ENCODE measurements at regions of chr16 and their contacts with region 1.

Region 1: DNA sequence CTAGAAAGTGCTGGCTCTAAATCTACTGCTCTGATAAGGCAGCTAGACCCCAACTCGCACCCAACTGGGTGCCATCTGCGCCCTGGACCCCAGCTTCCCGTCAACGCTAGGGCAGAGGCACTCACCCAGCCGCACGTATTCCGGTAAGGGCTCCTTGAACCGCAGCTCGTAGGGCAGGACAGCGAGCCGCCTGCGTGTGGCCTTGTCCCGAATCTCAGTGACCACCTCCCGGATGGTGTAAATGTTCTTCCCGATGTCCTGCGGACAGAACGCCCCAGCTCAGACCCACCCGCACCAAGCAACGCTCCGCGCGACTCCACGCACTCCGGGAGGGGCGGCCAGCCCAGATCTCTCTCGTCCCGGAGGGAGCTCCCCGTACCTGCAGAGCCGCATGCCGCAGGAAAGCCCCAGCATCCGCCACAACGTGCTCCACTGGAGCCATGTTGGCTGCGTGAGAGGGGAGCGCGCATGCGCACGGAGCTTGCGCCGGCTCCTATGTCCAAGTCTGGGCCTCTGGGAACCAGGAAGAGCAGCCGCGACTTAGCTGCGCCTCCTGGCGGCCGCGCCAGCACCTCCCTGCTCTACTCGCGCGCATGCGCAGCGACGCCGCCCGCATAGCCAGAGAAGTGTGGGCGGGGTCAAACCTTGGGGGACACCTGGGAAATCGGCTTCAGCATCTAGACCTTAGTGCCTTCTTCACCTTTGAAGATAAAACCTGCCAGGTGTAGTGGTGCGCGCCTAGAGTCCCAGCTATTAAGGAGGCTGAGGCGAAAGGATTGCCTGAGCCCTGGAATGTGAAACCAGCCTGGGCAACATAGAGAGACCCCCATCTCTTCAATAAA is at the start of gene NOB1:
- DNase-seq: peak; percentile 97
- ATAC-seq: peak; percentile 99
- H3K4me3 Mint-ChIP-seq: peak within 1 kb of the TSS; percentile 100
- H3K27ac Mint-ChIP-seq: peak within 1 kb of the TSS; percentile 100
- H3K4me1 Mint-ChIP-seq: peaks cover 22% of the 10 kb centered on the region
- H3K27me3 Mint-ChIP-seq: no peaks in the 10 kb centered on the region
- CTCF ChIP-seq: peak; percentile 90
- total RNA-seq, gene NOB1: 139 to 146 TPM

Region 2: GRCh38 chr16:69381231-69381630 is 373.5 kb before region 1 on chr16:
- CTCF ChIA-PET with region 1: interaction called, 10 read pairs
- POLR2A ChIA-PET with region 1: interaction called, 6 read pairs
- intact Hi-C with region 1: no loop called
- DNase-seq: no peak
- ATAC-seq: no peak
- H3K4me3 Mint-ChIP-seq: no peak overlapping the region
- H3K27ac Mint-ChIP-seq: peak overlapping the region; percentile 55
- H3K4me1 Mint-ChIP-seq: peaks cover 45% of the 10 kb centered on the region
- H3K27me3 Mint-ChIP-seq: no peaks in the 10 kb centered on the region
- CTCF ChIP-seq: no peak

Region 3: GRCh38 chr16:69709456-69710084 is 45.1 kb before region 1 on chr16:
- CTCF ChIA-PET with region 1: interaction called, 47 read pairs
- POLR2A ChIA-PET with region 1: interaction called, 21 read pairs
- intact Hi-C with region 1: no loop called
- DNase-seq: no peak
- ATAC-seq: peak; percentile 53
- H3K4me3 Mint-ChIP-seq: no peak overlapping the region
- H3K27ac Mint-ChIP-seq: peak overlapping the region; percentile 67
- H3K4me1 Mint-ChIP-seq: peaks cover 5% of the 10 kb centered on the region
- H3K27me3 Mint-ChIP-seq: no peaks in the 10 kb centered on the region
- CTCF ChIP-seq: peak; percentile 86

Region 4: DNA sequence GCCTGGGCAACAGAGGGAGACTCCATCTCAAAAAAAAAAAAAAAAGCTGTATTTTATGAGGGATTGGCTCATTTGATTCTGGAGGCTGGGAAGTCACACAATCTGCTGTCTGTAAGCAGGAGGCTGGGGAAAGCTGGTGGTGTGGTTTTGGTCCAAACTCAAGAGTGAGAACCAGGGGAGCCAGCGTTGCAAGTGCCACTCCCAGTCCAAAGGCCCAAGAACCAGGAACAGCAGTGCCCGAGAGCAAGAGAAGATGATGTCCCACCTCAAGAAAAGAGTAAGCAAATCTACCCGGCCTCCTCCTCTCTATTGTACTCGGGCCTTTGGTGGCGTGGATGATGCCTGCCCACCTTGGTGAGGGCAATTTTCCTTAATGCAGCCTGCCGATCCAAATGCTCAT is 22.6 kb before region 1 on chr16:
- CTCF ChIA-PET with region 1: interaction called, 31 read pairs
- POLR2A ChIA-PET with region 1: interaction called, 13 read pairs
- intact Hi-C with region 1: no loop called
- DNase-seq: no peak
- ATAC-seq: no peak
- H3K4me3 Mint-ChIP-seq: no peak overlapping the region
- H3K27ac Mint-ChIP-seq: no peak overlapping the region
- H3K4me1 Mint-ChIP-seq: peaks cover 9% of the 10 kb centered on the region
- H3K27me3 Mint-ChIP-seq: no peaks in the 10 kb centered on the region
- CTCF ChIP-seq: no peak

Region 5: DNA sequence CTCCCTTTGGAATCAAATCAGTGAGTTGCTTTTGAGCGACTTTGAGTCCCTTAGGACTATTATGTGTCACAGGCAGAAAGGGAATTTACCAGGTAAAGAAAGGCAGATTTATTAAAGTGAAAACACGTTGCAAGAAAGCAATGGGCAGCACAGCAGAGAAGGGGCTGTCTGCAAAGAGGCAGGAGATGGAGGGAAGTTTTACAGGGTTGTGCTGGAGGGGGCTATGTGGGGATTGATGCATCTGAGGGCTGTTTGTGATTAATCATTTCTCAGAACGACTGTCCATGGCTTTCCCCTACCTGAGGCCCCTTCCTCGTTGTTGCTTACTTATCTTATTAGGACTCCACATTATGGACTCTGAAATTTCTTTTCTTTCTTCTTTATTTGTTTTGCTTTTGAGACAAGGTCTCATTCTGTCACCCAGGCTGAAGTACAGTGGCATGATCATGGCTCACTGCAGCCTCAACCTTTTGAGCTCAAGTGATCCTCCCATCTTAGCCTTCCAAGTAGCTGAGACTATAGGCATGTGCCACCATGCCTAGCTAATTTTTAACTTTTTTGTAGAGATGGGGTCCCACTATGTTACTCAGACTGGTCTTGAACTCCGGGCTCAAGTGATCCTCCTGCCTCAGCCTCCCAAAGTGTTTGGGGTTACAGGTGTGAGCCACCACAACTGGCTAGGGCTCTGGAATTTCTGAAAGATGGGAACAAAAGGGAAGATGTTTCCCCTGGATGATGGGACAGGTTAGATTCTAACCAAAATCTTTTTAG is 13.0 kb after region 1 on chr16:
- CTCF ChIA-PET with region 1: interaction called, 22 read pairs
- POLR2A ChIA-PET with region 1: interaction called, 23 read pairs
- intact Hi-C with region 1: no loop called
- DNase-seq: peak; percentile 26
- ATAC-seq: peak; percentile 40
- H3K4me3 Mint-ChIP-seq: no peak overlapping the region
- H3K27ac Mint-ChIP-seq: peak overlapping the region; percentile 76
- H3K4me1 Mint-ChIP-seq: peaks cover 52% of the 10 kb centered on the region
- H3K27me3 Mint-ChIP-seq: no peaks in the 10 kb centered on the region
- CTCF ChIP-seq: no peak